ENCODE measurements at regions of chr3 and their contacts with region 1.

Region 1: DNA sequence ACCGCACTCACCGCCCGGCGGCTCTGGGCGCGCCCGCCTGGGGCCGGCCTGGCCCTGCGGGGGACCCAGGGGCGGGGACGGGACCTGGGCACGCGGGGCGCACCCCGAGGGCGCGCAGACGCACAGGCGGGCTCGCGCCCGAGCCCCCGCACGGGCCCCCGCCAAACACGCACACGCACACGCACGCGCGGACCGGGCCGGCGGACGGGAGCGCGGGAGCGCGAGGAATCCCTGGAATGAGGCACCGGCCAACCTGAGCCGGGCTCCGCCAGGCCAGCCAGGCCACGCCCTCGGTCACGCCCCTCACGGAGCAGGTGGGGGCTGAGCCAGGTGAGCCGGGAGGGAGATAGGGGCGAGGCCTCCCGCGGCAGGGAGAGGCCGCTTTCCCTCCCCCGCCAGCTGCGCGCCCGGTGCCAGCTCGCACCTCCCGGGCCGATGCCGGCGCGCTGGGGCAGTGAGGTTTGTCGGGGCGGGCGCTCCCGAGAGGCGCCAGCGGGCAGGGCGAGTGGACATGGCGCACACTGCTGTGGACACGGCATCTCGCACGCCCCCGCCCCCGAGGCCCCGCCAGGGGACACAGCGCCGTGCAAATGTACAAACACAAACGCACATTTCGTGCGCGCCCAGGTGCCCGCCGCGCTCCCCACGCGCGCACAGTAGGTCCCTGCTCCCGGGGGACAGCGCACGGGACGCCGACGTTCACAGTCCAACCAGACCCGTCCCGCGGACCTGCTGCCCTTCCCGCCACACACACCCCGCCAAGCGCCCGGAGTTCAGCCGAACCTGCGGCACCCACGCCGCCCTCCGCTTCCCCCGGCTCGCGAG is 75.9 kb upstream of the VGLL4 start:
- DNase-seq: peak; percentile 81
- ATAC-seq: peak; percentile 72
- H3K4me3 ChIP-seq: peak overlapping the region in 4 of 5 experiments; percentile 44 to 83 (median 70)
- H3K4me3 Mint-ChIP-seq: peak overlapping the region; percentile 99
- H3K27ac ChIP-seq: peak overlapping the region in 1 of 2 donors; percentile 38
- H3K27ac Mint-ChIP-seq: peak overlapping the region; percentile 46
- H3K4me1 ChIP-seq: peaks cover 6 to 20% of the 10 kb centered on the region in 2 donors
- H3K4me1 Mint-ChIP-seq: peaks cover 26% of the 10 kb centered on the region
- H3K27me3 ChIP-seq: peaks cover 0 to 3% (median 2%) of the 10 kb centered on the region in 4 experiments
- H3K27me3 Mint-ChIP-seq: no peaks in the 10 kb centered on the region
- CTCF ChIP-seq: no peak

Region 2: GRCh38 chr3:11601446-11602238 is 118.0 kb before region 1 on chr3:
- CTCF ChIA-PET with region 1: no interaction called
- POLR2A ChIA-PET with region 1: no interaction called
- intact Hi-C with region 1: loop called (anchors 2 kb)
- DNase-seq: peak; percentile 81
- ATAC-seq: peak; percentile 99
- H3K4me3 ChIP-seq: peak overlapping the region in 1 of 5 experiments; percentile 2
- H3K4me3 Mint-ChIP-seq: peak overlapping the region; percentile 87
- H3K27ac ChIP-seq: peak overlapping the region; percentile 65 to 87
- H3K27ac Mint-ChIP-seq: peak overlapping the region; percentile 93
- H3K4me1 ChIP-seq: peaks cover 18 to 27% of the 10 kb centered on the region in 2 donors
- H3K4me1 Mint-ChIP-seq: peaks cover 41% of the 10 kb centered on the region
- H3K27me3 ChIP-seq: no peaks in the 10 kb centered on the region
- H3K27me3 Mint-ChIP-seq: no peaks in the 10 kb centered on the region
- CTCF ChIP-seq: no peak

Region 3: GRCh38 chr3:11643605-11644087 is 76.0 kb before region 1 on chr3 and contains the start of gene VGLL4:
- CTCF ChIA-PET with region 1: no interaction called
- POLR2A ChIA-PET with region 1: no interaction called
- intact Hi-C with region 1: loop called (anchors 5 kb)
- DNase-seq: peak; percentile 71
- ATAC-seq: peak; percentile 62
- H3K4me3 ChIP-seq: peak within 1 kb of the TSS; percentile 75 to 98 (median 83)
- H3K4me3 Mint-ChIP-seq: peak within 1 kb of the TSS; percentile 91
- H3K27ac ChIP-seq: peak within 1 kb of the TSS; percentile 80 to 91
- H3K27ac Mint-ChIP-seq: peak within 1 kb of the TSS; percentile 91
- H3K4me1 ChIP-seq: peaks cover 7 to 18% of the 10 kb centered on the region in 2 donors
- H3K4me1 Mint-ChIP-seq: peaks cover 31% of the 10 kb centered on the region
- H3K27me3 ChIP-seq: no peaks in the 10 kb centered on the region
- H3K27me3 Mint-ChIP-seq: no peaks in the 10 kb centered on the region
- CTCF ChIP-seq: no peak
- total RNA-seq, gene VGLL4: 29.0 and 30.2 TPM in 2 replicates

Region 4: GRCh38 chr3:11757441-11757875 is 37.8 kb after region 1 on chr3:
- CTCF ChIA-PET with region 1: no interaction called
- POLR2A ChIA-PET with region 1: no interaction called
- intact Hi-C with region 1: no loop called
- DNase-seq: no peak
- ATAC-seq: no peak
- H3K4me3 ChIP-seq: no peak overlapping the region
- H3K4me3 Mint-ChIP-seq: no peak overlapping the region
- H3K27ac ChIP-seq: no peak overlapping the region
- H3K27ac Mint-ChIP-seq: no peak overlapping the region
- H3K4me1 ChIP-seq: no peaks in the 10 kb centered on the region
- H3K4me1 Mint-ChIP-seq: no peaks in the 10 kb centered on the region
- H3K27me3 ChIP-seq: no peaks in the 10 kb centered on the region
- H3K27me3 Mint-ChIP-seq: no peaks in the 10 kb centered on the region
- CTCF ChIP-seq: no peak

Region 5: DNA sequence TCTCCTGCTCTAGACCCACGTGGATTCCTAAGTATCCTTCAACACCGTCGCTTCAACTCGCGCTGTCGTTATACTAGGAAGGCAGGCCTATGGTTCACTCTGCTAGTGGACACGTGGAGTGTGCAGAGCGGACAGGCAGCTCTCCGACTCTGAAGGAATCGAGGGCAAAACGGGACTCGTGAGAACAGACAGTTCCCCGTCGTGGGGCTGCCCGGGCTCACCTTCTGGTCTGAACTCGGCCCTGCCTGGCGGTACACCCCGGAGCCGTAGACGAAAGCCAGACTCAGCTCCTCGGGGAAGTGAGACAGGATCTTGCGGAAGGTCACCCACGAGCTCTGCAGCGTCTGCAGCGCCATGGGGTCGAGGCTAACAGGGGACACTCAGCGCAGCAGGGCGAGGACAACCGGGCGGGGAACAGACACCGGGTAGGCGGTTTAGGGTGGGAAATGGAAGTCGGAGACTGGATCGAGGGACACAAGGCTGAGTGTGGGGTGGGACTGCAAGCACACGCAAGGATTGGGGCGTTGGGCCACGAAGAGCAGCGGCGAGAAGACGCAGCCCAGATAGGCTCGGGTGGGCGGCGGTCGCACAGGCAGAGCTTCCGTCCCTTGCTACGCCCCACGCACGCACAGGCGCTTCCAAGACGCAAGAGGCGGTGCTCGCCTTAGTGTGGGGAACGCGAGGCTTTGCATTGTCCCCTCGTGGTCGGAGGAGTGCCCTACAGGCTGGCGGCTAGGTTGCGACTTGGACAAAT is 126.8 kb after region 1 on chr3 and contains the start of gene TAMM41:
- CTCF ChIA-PET with region 1: no interaction called
- POLR2A ChIA-PET with region 1: no interaction called
- intact Hi-C with region 1: loop called (anchors 5 kb)
- DNase-seq: peak; percentile 90
- ATAC-seq: peak; percentile 100
- H3K4me3 ChIP-seq: peak within 1 kb of the TSS; percentile 56 to 96 (median 82)
- H3K4me3 Mint-ChIP-seq: peak within 1 kb of the TSS; percentile 99
- H3K27ac ChIP-seq: peak within 1 kb of the TSS; percentile 77 to 82
- H3K27ac Mint-ChIP-seq: peak within 1 kb of the TSS; percentile 96
- H3K4me1 ChIP-seq: peaks cover 22 to 27% of the 10 kb centered on the region in 2 donors
- H3K4me1 Mint-ChIP-seq: peaks cover 39% of the 10 kb centered on the region
- H3K27me3 ChIP-seq: no peaks in the 10 kb centered on the region
- H3K27me3 Mint-ChIP-seq: no peaks in the 10 kb centered on the region
- CTCF ChIP-seq: peak; percentile 74
- total RNA-seq, gene TAMM41: 52.3 and 54.2 TPM in 2 replicates